ENCODE measurements at regions of chr15 and their contacts with region 1.

Region 1: GRCh38 chr15:71397377-71397776 is 282.1 kb downstream of the THSD4 start:
- DNase-seq: no peak
- H3K4me3 ChIP-seq: no peak overlapping the region
- CTCF ChIP-seq: no peak

Region 2: GRCh38 chr15:71329497-71330260 is 67.7 kb before region 1 on chr15:
- in situ Hi-C with region 1: no loop called
- DNase-seq: no peak
- H3K4me3 ChIP-seq: no peak overlapping the region
- CTCF ChIP-seq: no peak

Region 3: GRCh38 chr15:71431345-71432336 is 34.3 kb after region 1 on chr15:
- in situ Hi-C with region 1: loop called (anchors 5 kb)
- DNase-seq: no peak
- H3K4me3 ChIP-seq: no peak overlapping the region
- CTCF ChIP-seq: no peak